Activated naive CD8-positive, alpha-beta T cell treated with anti-CD3 and anti-CD28 coated beads, Interleukin-2, amount 10 ng/mL, durations not matched to agents 7 days and 5 days (primary cell): ENCODE measurements at regions of chr6 and their contacts with region 1.

Region 1: DNA sequence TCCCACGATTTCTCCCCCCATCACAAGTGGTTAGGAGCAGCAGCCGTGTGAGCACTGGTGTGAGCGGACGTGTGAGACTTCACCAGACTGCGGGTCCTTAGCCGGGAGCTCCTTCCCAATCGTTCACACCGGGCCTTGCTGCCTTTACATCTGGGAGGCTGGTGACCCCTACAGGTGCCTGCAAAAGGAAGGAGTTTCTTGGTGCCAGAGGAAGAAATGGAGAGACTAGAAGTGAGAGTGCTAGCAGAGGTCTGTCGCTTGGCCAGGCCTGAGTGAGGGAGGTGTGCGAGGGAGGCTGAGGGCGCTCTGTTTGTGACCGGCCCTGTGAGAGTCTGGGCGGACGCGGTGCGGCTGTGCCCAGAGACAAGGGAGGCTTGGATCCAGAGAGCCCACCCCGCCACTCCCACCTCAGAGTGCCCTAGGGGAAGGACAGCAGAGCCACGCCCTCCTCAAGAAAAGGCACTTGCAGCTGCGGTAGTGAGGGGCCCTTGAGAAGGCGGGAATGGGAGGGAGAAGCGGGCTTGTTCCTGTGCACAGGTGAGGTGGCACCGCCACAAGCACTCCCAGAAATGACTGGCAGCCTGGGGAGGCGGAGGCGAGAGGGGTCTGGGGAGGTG is 10.0 kb upstream of the ARMC2 start:
- DNase-seq: no peak
- ATAC-seq: no peak
- H3K4me3 Mint-ChIP-seq: peak overlapping the region; percentile 65
- H3K27ac Mint-ChIP-seq: peak overlapping the region; percentile 70
- H3K4me1 Mint-ChIP-seq: peaks cover 32% of the 10 kb centered on the region
- H3K27me3 Mint-ChIP-seq: peaks cover 2% of the 10 kb centered on the region

Region 2: DNA sequence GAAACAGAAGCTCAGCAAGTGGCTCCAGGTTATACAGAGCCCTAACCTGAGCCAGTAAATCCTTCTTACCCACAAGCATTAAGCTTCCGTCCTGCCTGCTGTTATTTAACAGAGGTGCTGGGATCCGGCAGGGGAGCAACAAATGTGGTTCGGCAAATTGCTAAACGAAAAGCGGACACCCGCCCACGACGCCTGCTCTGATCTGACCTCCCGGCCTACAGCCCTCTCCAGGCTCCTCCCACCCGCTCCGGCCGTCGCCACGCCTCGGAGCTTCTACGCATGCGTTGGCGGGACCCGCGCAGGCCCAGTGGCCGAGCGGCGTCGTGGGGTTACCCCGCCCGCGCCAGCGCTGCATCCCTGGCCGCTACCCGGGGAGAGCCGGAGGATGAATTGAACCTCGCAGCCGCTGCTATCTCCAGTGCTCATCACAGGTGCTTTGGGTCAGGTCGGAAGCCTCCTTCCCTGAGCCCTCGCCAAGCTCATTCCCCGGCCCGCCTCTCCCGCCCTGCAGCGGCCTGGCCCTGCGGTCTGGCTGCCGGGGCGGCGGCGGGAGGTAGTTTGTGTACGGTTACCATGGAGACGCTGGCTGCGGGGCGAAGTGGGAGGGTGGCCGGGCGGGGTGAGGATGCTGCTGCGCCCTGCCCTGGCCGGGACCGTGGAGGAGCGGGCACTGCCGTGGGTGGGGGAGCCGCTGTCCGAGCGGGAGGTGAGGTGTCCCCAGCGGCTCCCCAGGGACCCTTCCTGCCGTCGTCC is 10.1 kb after region 1 on chr6 and contains the start of gene ARMC2:
- POLR2A ChIA-PET with region 1: interaction called, 10 read pairs
- DNase-seq: peak; percentile 94
- ATAC-seq: peak; percentile 92
- H3K4me3 Mint-ChIP-seq: peak within 1 kb of the TSS; percentile 89
- H3K27ac Mint-ChIP-seq: peak within 1 kb of the TSS; percentile 84
- H3K4me1 Mint-ChIP-seq: peaks cover 20% of the 10 kb centered on the region
- H3K27me3 Mint-ChIP-seq: peaks cover 7% of the 10 kb centered on the region
- total RNA-seq, gene ARMC2: 12.2 to 15.3 TPM

Region 3: GRCh38 chr6:109034526-109034925 is 196.3 kb after region 1 on chr6:
- POLR2A ChIA-PET with region 1: no interaction called
- DNase-seq: no peak
- ATAC-seq: no peak
- H3K4me3 Mint-ChIP-seq: no peak overlapping the region
- H3K27ac Mint-ChIP-seq: no peak overlapping the region
- H3K4me1 Mint-ChIP-seq: peaks cover 15% of the 10 kb centered on the region
- H3K27me3 Mint-ChIP-seq: peaks cover 6% of the 10 kb centered on the region